ENCODE measurements at regions of chr13 and their contacts with region 1.

Region 1: GRCh38 chr13:40922437-40923040 is 96.6 kb downstream of the ELF1 start:
- DNase-seq: peak; percentile 61
- H3K4me3 ChIP-seq: no peak overlapping the region
- H3K27ac ChIP-seq: peak overlapping the region; percentile 39 to 92 (median 50)
- H3K4me1 ChIP-seq: peaks cover 3 to 19% (median 12%) of the 10 kb centered on the region in 4 donors
- H3K27me3 ChIP-seq: no peaks in the 10 kb centered on the region
- CTCF ChIP-seq: no peak
- EP300 ChIP-seq: no peak
- POLR2A ChIP-seq: no peak

Region 2: DNA sequence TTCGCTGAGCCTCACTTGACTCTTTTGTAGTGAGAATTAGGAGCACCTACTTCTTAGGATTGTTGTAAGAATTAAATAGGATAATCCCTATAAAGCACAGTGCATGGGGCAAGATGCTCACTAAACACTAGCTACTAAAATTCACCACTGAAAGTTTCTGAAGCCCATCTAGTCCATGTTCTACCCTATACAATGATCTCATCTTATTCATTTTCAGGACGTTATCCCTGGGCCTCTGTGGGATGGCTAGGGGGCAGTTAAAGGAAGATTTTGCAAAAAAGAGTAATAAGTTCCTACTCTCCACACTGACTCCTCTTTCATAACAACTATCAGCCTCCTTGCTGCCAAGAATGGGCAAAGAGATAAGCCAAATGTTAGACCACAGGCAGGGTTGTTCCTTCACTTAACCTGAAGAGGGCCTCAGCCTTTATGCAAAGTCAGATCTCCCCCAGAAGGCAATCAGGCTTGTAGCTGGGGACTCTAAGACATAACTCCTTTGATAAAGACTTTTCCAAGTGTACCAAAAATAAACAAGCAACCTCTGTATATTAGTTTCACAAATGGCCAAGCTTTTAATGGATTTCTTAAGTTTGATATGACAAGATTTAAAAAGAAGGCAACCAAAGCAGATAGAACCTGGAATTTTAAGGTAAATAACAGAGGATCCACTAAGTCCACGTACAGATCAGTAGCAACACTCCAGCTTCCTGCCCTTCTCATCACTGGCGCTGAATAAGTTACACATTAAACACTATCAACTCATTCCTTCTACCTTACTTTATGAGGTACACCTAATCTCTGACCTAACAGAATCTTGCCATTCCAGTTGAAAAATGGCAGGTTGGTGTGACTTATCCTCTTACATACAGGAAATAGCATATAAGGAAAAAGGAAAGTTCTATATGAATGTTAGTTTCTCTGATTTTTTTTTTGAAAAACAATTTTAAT is 52.2 kb after region 1 on chr13:
- in situ Hi-C with region 1: no loop called
- intact Hi-C with region 1: no loop called
- DNase-seq: peak; percentile 20
- H3K4me3 ChIP-seq: peak overlapping the region in 1 of 4 donors; percentile 27
- H3K27ac ChIP-seq: peak overlapping the region; percentile 71 to 82 (median 78)
- H3K4me1 ChIP-seq: peaks cover 42 to 89% (median 64%) of the 10 kb centered on the region in 4 donors
- H3K27me3 ChIP-seq: no peaks in the 10 kb centered on the region
- CTCF ChIP-seq: peak in 4 of 5 experiments; percentile 34 to 53 (median 46)
- EP300 ChIP-seq: no peak
- POLR2A ChIP-seq: no peak

Region 3: DNA sequence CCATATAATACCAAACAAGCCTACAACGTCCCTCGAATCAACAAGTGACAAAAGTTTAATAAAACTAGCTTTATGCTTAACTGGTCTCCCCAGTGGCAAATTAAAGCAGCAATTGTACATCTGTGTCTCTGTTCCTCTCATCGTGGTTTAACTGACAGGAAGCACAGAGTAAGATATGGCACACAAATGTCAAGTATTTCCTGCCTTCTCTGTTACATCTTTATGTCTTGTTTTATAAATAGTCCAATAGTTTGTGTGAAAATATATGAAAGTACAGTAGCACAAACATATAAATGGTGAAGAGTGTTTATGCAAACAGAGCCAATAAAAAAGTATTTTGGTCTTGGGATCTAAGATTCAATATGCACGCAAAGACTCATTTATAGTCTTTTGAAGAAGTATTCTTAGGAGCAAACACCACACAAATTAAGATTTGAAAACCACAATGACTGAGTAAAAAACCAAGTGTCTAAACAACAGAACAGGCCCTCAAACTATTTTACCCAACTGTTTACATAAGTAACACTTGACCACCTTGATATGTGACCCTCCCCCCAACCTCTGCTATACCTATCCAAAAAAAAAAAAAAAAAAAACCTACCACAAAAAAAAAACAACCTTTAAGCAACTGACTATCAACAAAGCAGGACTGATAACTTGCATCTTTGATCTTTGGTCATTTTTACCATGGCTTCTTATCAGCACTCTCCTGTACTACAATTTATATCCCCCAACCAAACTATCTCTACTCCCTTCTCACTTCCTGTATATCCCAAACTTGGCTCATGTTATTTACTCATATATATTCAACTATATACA is 82.5 kb after region 1 on chr13:
- in situ Hi-C with region 1: no loop called
- intact Hi-C with region 1: no loop called
- DNase-seq: no peak
- H3K4me3 ChIP-seq: peak overlapping the region in 1 of 4 donors; percentile 1
- H3K27ac ChIP-seq: peak overlapping the region; percentile 54 to 74 (median 70)
- H3K4me1 ChIP-seq: peaks cover 30 to 86% (median 56%) of the 10 kb centered on the region in 4 donors
- H3K27me3 ChIP-seq: no peaks in the 10 kb centered on the region
- CTCF ChIP-seq: no peak
- EP300 ChIP-seq: no peak
- POLR2A ChIP-seq: peak; percentile 12

Region 4: DNA sequence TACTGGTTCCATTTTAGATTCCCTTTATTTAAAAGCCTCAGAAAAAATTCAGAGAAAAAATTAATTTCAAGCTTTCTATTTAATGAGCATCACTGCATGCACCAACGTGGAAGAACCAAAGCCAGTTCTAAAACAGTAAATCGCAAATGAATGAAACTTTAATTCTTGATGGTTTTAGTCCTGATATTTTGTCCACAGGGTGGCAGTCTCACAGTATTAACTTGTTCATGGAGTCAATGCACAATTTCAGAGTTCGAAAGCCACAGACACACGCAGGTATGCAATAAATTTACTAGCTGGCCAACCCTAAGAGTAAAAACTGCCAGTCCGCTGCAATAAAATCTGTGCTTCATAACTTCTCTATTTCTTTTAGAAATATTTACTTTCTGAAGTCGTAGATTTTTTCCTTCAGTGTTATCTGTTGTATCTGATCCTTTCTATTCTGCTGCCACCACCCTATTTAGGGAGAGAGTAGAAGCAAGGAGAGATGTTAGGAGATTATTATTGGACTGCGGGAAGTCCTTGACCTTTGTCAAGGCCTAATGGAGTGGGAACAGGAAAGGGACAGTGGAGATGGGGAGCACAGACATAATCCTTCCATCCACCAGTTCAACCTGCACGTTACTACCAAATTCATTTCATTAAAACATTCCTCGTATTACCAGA is 131.8 kb after region 1 on chr13:
- in situ Hi-C with region 1: no loop called
- intact Hi-C with region 1: loop called (anchors 10 kb)
- DNase-seq: peak; percentile 42
- H3K4me3 ChIP-seq: no peak overlapping the region
- H3K27ac ChIP-seq: peak overlapping the region; percentile 65 to 81 (median 77)
- H3K4me1 ChIP-seq: peaks cover 55 to 99% (median 71%) of the 10 kb centered on the region in 4 donors
- H3K27me3 ChIP-seq: no peaks in the 10 kb centered on the region
- CTCF ChIP-seq: peak; percentile 53 to 78 (median 56)
- EP300 ChIP-seq: no peak
- POLR2A ChIP-seq: no peak